GM10248 (cell line): ENCODE measurements at regions of chr21 and their contacts with region 1.

Region 1: GRCh38 chr21:34603002-34603709 is 11.8 kb downstream of the RCAN1 start:
- DNase-seq: peak; percentile 78
- CTCF ChIP-seq: peak; percentile 82

Region 2: DNA sequence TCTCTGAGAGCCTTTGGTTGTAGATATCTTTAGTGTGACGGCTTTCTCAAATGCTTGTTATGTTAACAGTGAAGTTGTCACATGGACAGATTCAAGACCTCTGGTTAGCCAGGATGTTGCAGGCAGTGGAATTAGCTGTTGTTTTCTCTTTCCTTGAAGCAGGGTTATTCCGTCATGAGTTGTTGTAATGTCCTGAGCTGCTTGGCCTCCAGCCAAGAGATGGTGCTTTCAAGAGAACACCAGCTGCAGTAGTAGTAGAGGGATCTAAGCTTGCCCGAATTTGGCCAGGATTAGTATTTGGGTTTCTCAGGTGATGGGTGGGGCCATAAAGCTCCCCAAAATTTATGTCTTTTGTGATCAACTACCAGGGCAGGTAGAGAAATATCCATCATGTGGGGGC is 104.5 kb before region 1 on chr21:
- CTCF ChIA-PET with region 1: interaction called, 17 read pairs
- POLR2A ChIA-PET with region 1: no interaction called
- DNase-seq: no peak
- CTCF ChIP-seq: no peak

Region 3: GRCh38 chr21:34526618-34527290 is 76.4 kb before region 1 on chr21:
- CTCF ChIA-PET with region 1: interaction called, 33 read pairs
- POLR2A ChIA-PET with region 1: no interaction called
- DNase-seq: peak; percentile 48
- CTCF ChIP-seq: no peak

Region 4: GRCh38 chr21:34582506-34583150 is 20.5 kb before region 1 on chr21:
- CTCF ChIA-PET with region 1: interaction called, 25 read pairs
- POLR2A ChIA-PET with region 1: no interaction called
- DNase-seq: peak; percentile 64
- CTCF ChIP-seq: peak; percentile 33

Region 5: DNA sequence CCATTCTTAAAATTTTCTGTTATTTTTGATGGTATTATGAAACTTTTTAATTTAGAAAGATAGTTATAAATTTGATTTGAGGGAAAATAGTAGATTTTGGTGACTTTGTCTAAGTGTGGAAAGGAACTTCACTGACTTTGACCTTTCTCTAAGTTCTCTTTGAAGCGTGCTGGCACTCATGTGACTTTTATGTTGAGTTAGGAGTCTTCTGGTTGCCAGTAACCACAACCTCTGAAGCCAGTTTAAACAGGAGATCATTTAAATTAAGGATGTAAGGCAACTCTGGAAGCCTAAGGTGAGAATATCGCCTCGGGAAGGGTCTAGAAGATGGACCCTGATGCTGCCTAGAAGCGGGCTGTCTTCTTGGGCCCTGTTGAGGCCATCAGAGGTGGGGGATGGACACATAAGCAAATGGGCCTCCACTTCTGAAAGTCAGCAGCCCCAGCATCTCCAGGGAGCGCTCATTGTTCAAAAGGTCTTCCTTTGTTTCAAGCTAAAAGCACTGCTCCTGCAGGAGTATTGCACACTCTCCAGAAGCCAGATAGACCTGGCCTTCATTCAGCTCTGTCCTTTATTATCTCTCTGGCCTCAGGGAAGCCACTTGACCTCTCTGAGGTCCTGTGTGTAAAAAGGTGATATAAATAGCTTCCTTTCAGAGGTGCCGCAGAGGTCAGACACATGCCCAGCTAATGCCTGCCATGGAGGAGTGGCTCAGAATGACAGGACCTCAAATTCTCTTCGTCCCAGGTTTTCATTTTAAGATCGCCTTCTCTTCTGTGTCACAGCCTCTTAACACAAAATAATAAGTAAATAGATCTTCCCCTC is 16.9 kb after region 1 on chr21:
- CTCF ChIA-PET with region 1: interaction called, 67 read pairs
- POLR2A ChIA-PET with region 1: no interaction called
- DNase-seq: no peak
- CTCF ChIP-seq: no peak